MCF 10A (cell line): ENCODE measurements at regions of chr11 and their contacts with region 1.

Region 1: GRCh38 chr11:129331871-129332274 is 43.8 kb upstream of the BARX2 start:
- DNase-seq: peak; percentile 88
- H3K4me3 Mint-ChIP-seq: no peak overlapping the region
- H3K27ac Mint-ChIP-seq: peak overlapping the region; percentile 25
- H3K4me1 Mint-ChIP-seq: peaks cover 12% of the 10 kb centered on the region
- H3K27me3 Mint-ChIP-seq: no peaks in the 10 kb centered on the region
- CTCF ChIP-seq: peak; percentile 78

Region 2: GRCh38 chr11:128981254-128981653 is 350.6 kb before region 1 on chr11:
- CTCF ChIA-PET with region 1: interaction called, 3 read pairs
- POLR2A ChIA-PET with region 1: no interaction called
- intact Hi-C with region 1: loop called (anchors 10 kb)
- DNase-seq: peak; percentile 8
- H3K4me3 Mint-ChIP-seq: no peak overlapping the region
- H3K27ac Mint-ChIP-seq: no peak overlapping the region
- H3K4me1 Mint-ChIP-seq: no peaks in the 10 kb centered on the region
- H3K27me3 Mint-ChIP-seq: no peaks in the 10 kb centered on the region
- CTCF ChIP-seq: no peak

Region 3: DNA sequence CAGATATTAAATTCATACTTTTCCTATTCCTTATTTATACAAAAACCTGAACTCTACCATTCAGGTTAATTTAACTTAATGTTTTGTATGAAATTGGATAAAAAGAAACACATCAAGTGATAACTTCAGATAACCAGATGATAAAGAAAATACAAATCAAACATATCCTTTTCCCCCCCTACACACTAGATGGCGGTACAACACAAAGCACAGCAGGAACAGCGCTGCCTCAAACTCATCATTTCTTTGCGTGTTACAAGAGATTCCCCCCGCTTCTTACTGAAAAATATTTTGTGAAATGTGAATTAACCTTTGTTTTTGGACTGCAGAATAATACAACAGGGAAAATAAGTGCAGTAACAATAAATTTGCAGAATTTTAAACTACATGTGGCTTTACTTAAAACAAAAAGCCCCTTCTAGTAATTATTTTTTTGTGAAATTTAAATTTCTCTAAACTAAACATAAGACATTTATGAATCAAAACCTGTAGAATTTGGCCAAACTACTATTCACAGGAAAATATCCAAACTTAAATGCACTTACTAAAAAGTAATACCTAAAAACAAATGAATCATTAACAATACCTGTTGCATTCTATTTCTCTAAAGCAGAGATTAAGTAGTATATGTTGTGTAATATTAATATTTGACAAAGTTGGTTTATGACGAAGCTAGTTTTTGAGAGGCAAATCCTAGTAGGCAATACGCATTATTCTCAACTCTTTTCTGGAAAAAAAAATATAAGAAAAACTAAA is 214.1 kb before region 1 on chr11:
- CTCF ChIA-PET with region 1: interaction called, 62 read pairs
- POLR2A ChIA-PET with region 1: interaction called, 12 read pairs
- intact Hi-C with region 1: loop called (anchors 1 kb)
- DNase-seq: peak; percentile 79
- H3K4me3 Mint-ChIP-seq: no peak overlapping the region
- H3K27ac Mint-ChIP-seq: no peak overlapping the region
- H3K4me1 Mint-ChIP-seq: peaks cover 33% of the 10 kb centered on the region
- H3K27me3 Mint-ChIP-seq: no peaks in the 10 kb centered on the region
- CTCF ChIP-seq: peak; percentile 84

Region 4: DNA sequence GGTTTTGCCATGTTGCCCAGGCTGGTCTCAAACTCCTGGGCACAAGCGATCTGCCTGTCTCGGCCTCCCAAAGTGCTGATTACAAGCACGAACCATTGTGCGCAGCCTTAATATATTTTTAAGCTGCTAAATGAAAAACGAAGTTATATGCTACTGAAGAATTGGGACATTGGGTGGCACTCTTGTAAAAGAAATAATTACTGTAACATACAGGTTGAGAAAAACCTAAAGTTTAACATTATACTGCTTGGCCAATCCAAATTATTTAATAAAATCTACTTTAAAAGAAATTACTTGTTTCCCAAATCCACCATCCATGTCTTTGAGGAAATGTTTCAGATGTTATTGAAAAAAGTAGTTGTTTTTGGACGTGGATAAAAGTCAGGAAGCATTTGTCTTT is 101.9 kb before region 1 on chr11:
- CTCF ChIA-PET with region 1: interaction called, 26 read pairs
- POLR2A ChIA-PET with region 1: interaction called, 4 read pairs
- intact Hi-C with region 1: loop called (anchors 1 kb)
- DNase-seq: no peak
- H3K4me3 Mint-ChIP-seq: no peak overlapping the region
- H3K27ac Mint-ChIP-seq: no peak overlapping the region
- H3K4me1 Mint-ChIP-seq: peaks cover 5% of the 10 kb centered on the region
- H3K27me3 Mint-ChIP-seq: no peaks in the 10 kb centered on the region
- CTCF ChIP-seq: peak; percentile 20

Region 5: GRCh38 chr11:129279326-129280026 is 52.4 kb before region 1 on chr11:
- CTCF ChIA-PET with region 1: interaction called, 5 read pairs
- POLR2A ChIA-PET with region 1: interaction called, 3 read pairs
- intact Hi-C with region 1: loop called (anchors 5 kb)
- DNase-seq: peak; percentile 76
- H3K4me3 Mint-ChIP-seq: peak overlapping the region; percentile 80
- H3K27ac Mint-ChIP-seq: no peak overlapping the region
- H3K4me1 Mint-ChIP-seq: peaks cover 38% of the 10 kb centered on the region
- H3K27me3 Mint-ChIP-seq: no peaks in the 10 kb centered on the region
- CTCF ChIP-seq: peak; percentile 9

Region 6: DNA sequence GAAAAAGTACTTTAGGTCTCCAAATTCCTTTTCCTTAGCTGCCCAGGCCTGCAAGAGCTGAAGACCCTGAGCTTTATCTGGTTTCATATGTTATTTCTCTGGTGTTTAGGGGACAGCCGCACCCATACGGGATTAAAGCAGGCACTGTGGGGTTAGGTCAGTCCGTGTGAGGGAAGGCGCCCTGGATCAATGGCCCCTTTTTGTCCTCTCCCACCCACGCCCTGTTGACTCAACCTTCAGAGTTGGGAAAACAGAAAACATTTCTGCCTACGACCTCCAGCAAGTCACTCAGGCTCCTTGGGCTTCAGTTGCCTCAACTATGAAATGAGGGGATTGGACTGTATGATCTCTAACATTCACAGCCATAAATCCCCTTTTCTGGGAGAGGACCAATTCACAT is 11.4 kb before region 1 on chr11:
- CTCF ChIA-PET with region 1: interaction called, 22 read pairs
- POLR2A ChIA-PET with region 1: interaction called, 6 read pairs
- intact Hi-C with region 1: no loop called
- DNase-seq: no peak
- H3K4me3 Mint-ChIP-seq: no peak overlapping the region
- H3K27ac Mint-ChIP-seq: no peak overlapping the region
- H3K4me1 Mint-ChIP-seq: no peaks in the 10 kb centered on the region
- H3K27me3 Mint-ChIP-seq: no peaks in the 10 kb centered on the region
- CTCF ChIP-seq: no peak

Region 7: GRCh38 chr11:129489254-129489653 is 157.4 kb after region 1 on chr11:
- CTCF ChIA-PET with region 1: no interaction called
- POLR2A ChIA-PET with region 1: no interaction called
- intact Hi-C with region 1: no loop called
- DNase-seq: no peak
- H3K4me3 Mint-ChIP-seq: no peak overlapping the region
- H3K27ac Mint-ChIP-seq: no peak overlapping the region
- H3K4me1 Mint-ChIP-seq: no peaks in the 10 kb centered on the region
- H3K27me3 Mint-ChIP-seq: peaks cover 10% of the 10 kb centered on the region
- CTCF ChIP-seq: no peak

Region 8: GRCh38 chr11:129750349-129751292 is 418.7 kb after region 1 on chr11:
- CTCF ChIA-PET with region 1: interaction called, 12 read pairs
- POLR2A ChIA-PET with region 1: no interaction called
- intact Hi-C with region 1: no loop called
- DNase-seq: peak; percentile 72
- H3K4me3 Mint-ChIP-seq: no peak overlapping the region
- H3K27ac Mint-ChIP-seq: no peak overlapping the region
- H3K4me1 Mint-ChIP-seq: no peaks in the 10 kb centered on the region
- H3K27me3 Mint-ChIP-seq: peaks cover 13% of the 10 kb centered on the region
- CTCF ChIP-seq: peak; percentile 100